Vagina (tissue), 2 donors: ENCODE measurements at regions of chr11 and their contacts with region 1.

Region 1: GRCh38 chr11:57638005-57638781 is 11.5 kb downstream of the YPEL4 start:
- DNase-seq: no peak
- H3K4me3 ChIP-seq: peak overlapping the region; percentile 66 to 93
- H3K27ac ChIP-seq: peak overlapping the region; percentile 80
- H3K4me1 ChIP-seq: peaks cover 37% of the 10 kb centered on the region
- H3K27me3 ChIP-seq: no peaks in the 10 kb centered on the region
- CTCF ChIP-seq: peak in 1 of 3 experiments; percentile 8
- POLR2A ChIP-seq: peak in 1 of 2 donors; percentile 42

Region 2: DNA sequence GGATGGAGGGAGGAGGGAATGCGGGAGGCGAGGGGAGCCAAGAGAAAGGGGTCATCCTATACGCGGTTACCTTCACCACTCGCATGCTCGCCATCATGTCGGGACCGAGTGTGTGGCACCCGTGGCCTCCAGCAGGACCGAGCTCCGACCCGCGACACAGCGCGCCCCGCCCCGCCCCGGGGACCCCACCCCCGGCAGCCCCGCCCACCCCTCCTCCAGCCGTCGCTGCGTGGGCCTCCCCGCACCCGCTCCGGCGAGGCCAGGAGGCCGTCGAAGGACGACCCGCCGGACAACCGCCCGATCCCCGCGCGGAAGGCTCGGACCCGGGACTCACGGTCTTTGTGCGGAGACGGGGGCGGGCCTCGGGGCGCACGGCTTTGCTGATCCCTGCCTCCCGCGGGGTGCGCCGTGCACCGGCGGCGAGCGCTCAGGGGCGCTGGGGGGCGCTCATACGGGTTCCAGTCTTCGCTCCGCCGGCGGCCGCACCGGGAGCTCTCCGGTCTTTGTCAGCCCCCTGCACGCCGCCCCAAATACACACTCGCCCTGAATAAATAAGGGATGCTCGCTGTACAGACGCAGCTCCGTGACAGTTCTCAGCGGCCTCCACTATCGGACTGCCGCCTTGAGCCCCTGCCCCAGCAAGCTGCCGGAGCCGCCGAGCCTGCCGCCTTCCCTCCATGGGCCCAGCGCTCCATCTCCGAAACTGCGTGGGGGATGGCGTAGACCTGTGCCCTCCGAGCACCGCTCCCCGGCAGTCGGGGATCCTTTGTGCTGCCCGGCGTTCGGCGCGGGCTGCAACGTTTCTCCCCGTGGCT is 70.5 kb before region 1 on chr11 and contains the start of gene UBE2L6:
- intact Hi-C with region 1: loop called (anchors 2 kb)
- DNase-seq: no peak
- H3K4me3 ChIP-seq: peak within 1 kb of the TSS; percentile 69 to 83
- H3K27ac ChIP-seq: peak within 1 kb of the TSS; percentile 93
- H3K4me1 ChIP-seq: peaks cover 31% of the 10 kb centered on the region
- H3K27me3 ChIP-seq: no peaks in the 10 kb centered on the region
- CTCF ChIP-seq: peak in 1 of 3 experiments; percentile 75
- POLR2A ChIP-seq: no peak
- total RNA-seq, gene UBE2L6: 48.1 TPM

Region 3: GRCh38 chr11:57597916-57598830 is 40.0 kb before region 1 on chr11:
- intact Hi-C with region 1: loop called (anchors 2 kb)
- DNase-seq: peak in 1 of 2 donors; percentile 92
- H3K4me3 ChIP-seq: peak overlapping the region; percentile 61 to 83
- H3K27ac ChIP-seq: peak overlapping the region; percentile 92
- H3K4me1 ChIP-seq: peaks cover 30% of the 10 kb centered on the region
- H3K27me3 ChIP-seq: no peaks in the 10 kb centered on the region
- CTCF ChIP-seq: no peak
- POLR2A ChIP-seq: no peak